ENCODE measurements at regions of chr6 and their contacts with region 1.

Region 1: DNA sequence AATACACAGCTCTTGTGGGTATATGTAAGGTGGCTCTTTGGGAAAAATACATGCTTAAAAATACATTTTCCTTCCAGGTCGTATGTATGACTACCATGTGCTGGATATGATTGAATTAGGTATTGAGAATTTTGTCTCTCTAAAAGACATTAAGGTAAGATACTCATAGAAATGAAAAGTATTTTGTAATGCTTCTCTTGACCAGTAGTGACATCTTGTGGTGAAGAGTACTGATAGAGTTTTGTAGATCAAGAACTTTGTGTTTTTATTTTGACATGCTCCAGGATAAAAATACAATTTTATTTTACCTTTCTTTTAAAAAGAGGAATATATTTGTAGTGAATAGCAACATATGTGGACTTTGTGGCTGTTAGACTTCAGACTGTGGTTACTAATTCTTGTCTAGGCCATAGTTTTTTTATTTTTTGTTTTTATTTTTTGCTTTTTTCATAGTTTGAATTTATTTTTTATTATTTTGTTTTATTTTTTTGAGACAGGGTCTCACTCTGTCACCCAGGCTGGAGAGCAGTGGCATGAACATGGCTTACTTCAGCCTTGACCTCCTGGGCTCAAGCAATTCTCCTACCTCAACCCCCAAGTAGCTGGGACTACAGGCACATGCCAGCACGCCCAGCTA is 17.9 kb downstream of the RPF2 start:
- DNase-seq: peak; percentile 59
- H3K4me3 ChIP-seq: no peak overlapping the region
- H3K27ac ChIP-seq: no peak overlapping the region
- H3K4me1 ChIP-seq: no peaks in the 10 kb centered on the region
- H3K27me3 ChIP-seq: no peaks in the 10 kb centered on the region
- CTCF ChIP-seq: peak in 1 of 2 donors; percentile 10
- POLR2A ChIP-seq: no peak

Region 2: GRCh38 chr6:110456694-110457093 is 543.1 kb before region 1 on chr6:
- CTCF ChIA-PET with region 1: interaction called, 13 read pairs
- POLR2A ChIA-PET with region 1: no interaction called
- dilution Hi-C with region 1: no loop called
- intact Hi-C with region 1: loop called (anchors 10 kb)
- DNase-seq: no peak
- H3K4me3 ChIP-seq: no peak overlapping the region
- H3K27ac ChIP-seq: no peak overlapping the region
- H3K4me1 ChIP-seq: no peaks in the 10 kb centered on the region
- H3K27me3 ChIP-seq: peaks cover 5 to 22% of the 10 kb centered on the region in 2 experiments
- CTCF ChIP-seq: no peak
- POLR2A ChIP-seq: no peak

Region 3: GRCh38 chr6:111150577-111150976 is 150.8 kb after region 1 on chr6:
- CTCF ChIA-PET with region 1: no interaction called
- POLR2A ChIA-PET with region 1: no interaction called
- dilution Hi-C with region 1: no loop called
- intact Hi-C with region 1: no loop called
- DNase-seq: no peak
- H3K4me3 ChIP-seq: no peak overlapping the region
- H3K27ac ChIP-seq: no peak overlapping the region
- H3K4me1 ChIP-seq: no peaks in the 10 kb centered on the region
- H3K27me3 ChIP-seq: peaks cover 21 to 23% of the 10 kb centered on the region in 2 experiments
- CTCF ChIP-seq: no peak
- POLR2A ChIP-seq: no peak

Region 4: GRCh38 chr6:111750753-111751684 is 751.3 kb after region 1 on chr6:
- CTCF ChIA-PET with region 1: no interaction called
- POLR2A ChIA-PET with region 1: no interaction called
- dilution Hi-C with region 1: no loop called
- intact Hi-C with region 1: no loop called
- DNase-seq: peak; percentile 83
- H3K4me3 ChIP-seq: no peak overlapping the region
- H3K27ac ChIP-seq: peak overlapping the region; percentile 75
- H3K4me1 ChIP-seq: peaks cover 83% of the 10 kb centered on the region
- H3K27me3 ChIP-seq: no peaks in the 10 kb centered on the region
- CTCF ChIP-seq: no peak
- POLR2A ChIP-seq: no peak